ENCODE measurements at regions of chr17 and their contacts with region 1.

Region 1: DNA sequence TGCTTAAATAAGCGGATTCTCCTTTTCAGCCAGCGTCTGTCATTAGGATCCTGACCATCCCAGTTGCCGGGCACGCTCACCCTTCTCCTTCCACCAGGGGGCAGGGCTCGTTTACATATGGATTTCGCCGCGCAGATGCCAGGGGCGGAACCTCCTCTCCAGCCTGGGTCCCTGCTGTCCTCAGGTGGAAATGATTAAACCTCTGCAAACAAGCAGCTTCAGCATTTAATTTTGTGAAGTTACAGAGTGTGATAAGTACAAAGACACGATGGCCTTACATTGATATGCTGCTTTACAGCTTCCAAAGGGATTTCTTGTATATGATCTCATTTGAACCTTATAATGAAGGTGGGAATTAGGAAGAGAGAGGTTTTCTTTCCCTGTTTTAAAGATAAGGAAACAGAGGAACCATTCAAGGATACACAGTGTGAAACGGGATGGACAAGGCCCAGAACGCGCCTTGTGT is 3.9 kb upstream of the KRT28 start:
- DNase-seq: no peak
- ATAC-seq: peak; percentile 100
- H3K4me3 ChIP-seq: no peak overlapping the region
- H3K27ac ChIP-seq: no peak overlapping the region
- H3K4me1 ChIP-seq: peaks cover 5% of the 10 kb centered on the region
- H3K27me3 ChIP-seq: peaks cover 27% of the 10 kb centered on the region
- CTCF ChIP-seq: peak; percentile 92

Region 2: DNA sequence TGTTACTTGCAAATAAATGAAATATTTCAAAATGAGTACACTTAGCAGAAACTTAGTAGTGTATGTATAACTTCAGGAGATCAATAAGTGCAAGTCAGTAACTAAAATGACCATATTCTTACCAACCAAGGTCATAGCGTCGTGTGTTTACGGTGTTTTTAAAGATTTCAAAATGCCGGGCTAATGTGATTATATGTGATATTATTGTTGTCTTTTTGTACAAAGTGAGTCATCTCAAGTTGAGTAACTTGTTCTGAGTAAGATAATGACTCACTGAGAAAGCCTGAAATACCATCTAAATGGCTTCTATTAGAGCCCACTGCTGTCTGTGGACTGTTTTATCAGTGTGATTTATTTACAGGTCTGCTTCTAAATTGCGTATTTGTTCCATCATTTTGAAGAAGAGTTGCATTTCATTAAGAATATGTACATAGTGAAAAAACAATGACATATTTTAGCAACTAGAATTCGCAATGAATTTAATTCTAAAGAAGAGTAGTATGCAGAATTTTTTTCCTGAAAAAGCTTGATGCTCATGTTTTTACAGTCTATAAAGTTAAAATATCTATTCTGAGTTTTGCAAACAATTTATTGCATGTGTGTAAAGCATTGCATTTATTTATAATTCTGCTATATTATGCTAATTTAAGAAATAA is 50.6 kb after region 1 on chr17:
- CTCF ChIA-PET with region 1: interaction called, 3 read pairs
- POLR2A ChIA-PET with region 1: no interaction called
- in situ Hi-C with region 1: no loop called
- intact Hi-C with region 1: loop called (anchors 5 kb)
- DNase-seq: peak; percentile 50
- ATAC-seq: peak; percentile 85
- H3K4me3 ChIP-seq: no peak overlapping the region
- H3K27ac ChIP-seq: no peak overlapping the region
- H3K4me1 ChIP-seq: peaks cover 5% of the 10 kb centered on the region; the same call in 1 of the 2 replicates
- H3K27me3 ChIP-seq: no peaks in the 10 kb centered on the region
- CTCF ChIP-seq: no peak